ENCODE measurements at regions of chr2 and their contacts with region 1.

Region 1: DNA sequence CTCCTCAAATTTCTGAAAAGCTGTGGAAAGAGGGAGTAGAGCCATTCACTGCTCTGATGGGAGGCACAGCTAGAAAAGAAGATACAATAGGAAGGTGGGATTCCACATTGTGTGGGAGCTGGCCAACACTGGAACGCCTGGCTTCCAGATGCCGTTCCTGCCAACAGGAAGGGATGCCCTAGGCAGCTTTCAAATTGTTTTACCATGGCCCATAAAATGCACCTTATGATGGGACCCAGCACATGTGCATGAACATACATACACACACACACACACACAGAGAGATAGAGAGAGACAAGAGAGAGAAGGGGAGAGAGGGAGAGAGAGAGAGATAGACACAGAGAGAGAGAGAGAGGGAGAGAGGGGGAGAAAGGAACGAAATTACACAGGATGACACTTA is 86.1 kb upstream of the BZW1 start:
- DNase-seq: no peak
- H3K4me3 ChIP-seq: no peak overlapping the region
- H3K27ac ChIP-seq: no peak overlapping the region
- H3K4me1 ChIP-seq: no peaks in the 10 kb centered on the region
- H3K27me3 ChIP-seq: peaks cover 15% of the 10 kb centered on the region
- CTCF ChIP-seq: no peak
- EP300 ChIP-seq: no peak
- POLR2A ChIP-seq: no peak

Region 2: GRCh38 chr2:200747668-200748618 is 22.3 kb after region 1 on chr2:
- in situ Hi-C with region 1: no loop called
- intact Hi-C with region 1: loop called (anchors 1 kb)
- DNase-seq: no peak
- H3K4me3 ChIP-seq: no peak overlapping the region
- H3K27ac ChIP-seq: peak overlapping the region in 2 of 4 donors; percentile 32 to 45
- H3K4me1 ChIP-seq: peaks cover 0 to 12% (median 4%) of the 10 kb centered on the region in 4 donors
- H3K27me3 ChIP-seq: no peaks in the 10 kb centered on the region
- CTCF ChIP-seq: no peak
- EP300 ChIP-seq: no peak
- POLR2A ChIP-seq: no peak

Region 3: GRCh38 chr2:201327678-201328077 is 602.1 kb after region 1 on chr2:
- in situ Hi-C with region 1: no loop called
- intact Hi-C with region 1: no loop called
- DNase-seq: no peak
- H3K4me3 ChIP-seq: no peak overlapping the region
- H3K27ac ChIP-seq: no peak overlapping the region
- H3K4me1 ChIP-seq: no peaks in the 10 kb centered on the region
- H3K27me3 ChIP-seq: no peaks in the 10 kb centered on the region
- CTCF ChIP-seq: no peak
- EP300 ChIP-seq: no peak
- POLR2A ChIP-seq: no peak